Breast epithelium (tissue), 4 donors: ENCODE measurements at regions of chr6 and their contacts with region 1.

Region 1: DNA sequence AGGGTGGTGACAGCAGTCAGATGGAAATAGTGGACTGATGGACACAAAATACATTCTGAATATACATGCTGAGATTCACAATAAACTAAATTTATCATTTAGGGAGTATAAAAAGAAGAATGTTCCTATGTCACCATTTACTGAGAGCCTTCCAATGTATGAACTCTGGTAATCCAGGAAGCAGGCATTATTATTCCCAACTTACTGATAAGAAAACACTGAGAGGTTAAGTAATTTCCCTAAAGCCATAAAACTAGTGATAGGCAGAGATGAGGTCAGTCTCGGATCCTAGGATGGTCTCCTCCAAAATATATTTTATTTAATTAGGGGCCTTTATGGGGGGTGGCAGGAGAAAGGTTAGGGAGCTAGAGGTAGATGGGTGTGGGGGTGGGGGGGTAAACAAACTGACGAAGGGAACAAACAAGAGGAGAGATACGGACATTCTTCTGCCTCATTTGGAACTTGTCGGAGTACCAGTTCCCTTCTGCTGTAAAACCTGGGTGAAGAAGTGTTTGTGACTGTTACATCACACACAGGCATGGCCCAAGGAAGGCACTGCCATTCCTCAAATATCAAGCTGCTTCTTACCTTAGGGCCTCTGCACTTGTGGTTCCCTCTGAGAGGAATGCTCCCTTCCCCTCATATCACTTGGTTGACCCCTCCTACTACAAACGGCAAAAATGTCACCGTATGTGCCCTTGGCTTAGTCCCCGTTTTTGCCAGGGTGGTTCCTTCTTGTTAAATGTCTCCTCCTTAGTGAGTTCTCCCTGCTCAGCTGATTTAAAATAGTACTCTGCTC is 6.7 kb downstream of the SAYSD1 start:
- DNase-seq: no peak
- H3K4me3 ChIP-seq: no peak overlapping the region
- H3K27ac ChIP-seq: no peak overlapping the region
- H3K4me1 ChIP-seq: no peaks in the 10 kb centered on the region
- H3K27me3 ChIP-seq: no peaks in the 10 kb centered on the region
- CTCF ChIP-seq: no peak
- POLR2A ChIP-seq: no peak

Region 2: GRCh38 chr6:37169496-37170272 is 1938.6 kb before region 1 on chr6 and contains the start of gene PIM1:
- intact Hi-C with region 1: no loop called
- DNase-seq: peak; percentile 99
- H3K4me3 ChIP-seq: peak within 1 kb of the TSS; percentile 84 to 99 (median 89)
- H3K27ac ChIP-seq: peak within 1 kb of the TSS; percentile 93
- H3K4me1 ChIP-seq: peaks cover 0 to 7% of the 10 kb centered on the region in 2 donors
- H3K27me3 ChIP-seq: no peaks in the 10 kb centered on the region
- CTCF ChIP-seq: no peak
- POLR2A ChIP-seq: no peak
- total RNA-seq, gene PIM1: 17.4 to 56.0 (median 31.6) TPM

Region 3: GRCh38 chr6:39124114-39124513 is 15.9 kb after region 1 on chr6:
- intact Hi-C with region 1: no loop called
- DNase-seq: no peak
- H3K4me3 ChIP-seq: no peak overlapping the region
- H3K27ac ChIP-seq: no peak overlapping the region
- H3K4me1 ChIP-seq: no peaks in the 10 kb centered on the region
- H3K27me3 ChIP-seq: no peaks in the 10 kb centered on the region
- CTCF ChIP-seq: no peak
- POLR2A ChIP-seq: no peak

Region 4: GRCh38 chr6:40509716-40510250 is 1401.5 kb after region 1 on chr6:
- intact Hi-C with region 1: loop called (anchors 5 kb)
- DNase-seq: no peak
- H3K4me3 ChIP-seq: no peak overlapping the region
- H3K27ac ChIP-seq: no peak overlapping the region
- H3K4me1 ChIP-seq: no peaks in the 10 kb centered on the region
- H3K27me3 ChIP-seq: no peaks in the 10 kb centered on the region
- CTCF ChIP-seq: no peak
- POLR2A ChIP-seq: no peak